Caki2 (cell line): ENCODE measurements at regions of chr9 and their contacts with region 1.

Region 1: DNA sequence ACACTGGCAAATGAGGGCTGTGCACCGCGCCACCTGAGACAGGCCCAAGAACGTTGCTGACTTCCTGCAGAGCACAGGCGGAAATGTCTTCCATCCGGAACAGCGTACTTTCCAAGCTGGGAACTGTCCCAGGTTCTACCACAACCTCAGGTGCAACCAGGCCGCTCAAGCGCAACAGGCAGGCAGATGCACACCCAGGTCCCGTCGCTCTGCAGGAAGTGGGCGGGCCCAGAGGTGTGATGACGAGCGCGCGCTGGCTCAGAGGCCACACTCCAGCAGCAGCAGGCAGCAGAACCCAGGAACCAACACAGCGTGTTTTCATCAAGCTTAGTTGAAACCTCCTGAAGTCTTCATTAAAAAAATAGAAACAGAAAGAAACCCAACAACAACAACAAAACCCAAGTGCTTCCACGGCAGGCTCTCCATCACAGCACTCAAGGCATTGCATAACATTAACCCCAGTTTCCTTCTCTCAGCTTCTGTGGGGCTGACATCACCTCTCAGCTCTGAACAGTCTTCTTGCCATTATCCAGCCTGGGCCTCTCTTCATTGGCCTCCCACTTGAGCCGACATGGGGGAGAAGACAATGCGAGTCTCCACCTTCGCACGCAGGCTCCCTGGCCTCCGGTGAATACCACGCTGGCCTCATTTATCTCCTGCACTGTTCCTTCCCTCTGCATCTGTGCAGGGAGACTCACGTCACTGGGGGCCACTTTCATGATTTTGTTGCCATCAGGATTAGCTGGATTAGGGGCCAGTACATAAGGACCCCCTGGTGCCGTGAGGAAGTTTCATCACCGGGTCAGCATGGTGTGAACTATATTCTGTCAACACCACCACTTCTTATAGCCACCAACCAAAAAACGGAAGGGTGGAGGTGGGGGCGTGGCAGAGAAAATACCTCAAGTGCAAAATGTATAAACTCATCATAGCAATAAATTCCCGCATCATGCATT is 22.1 kb downstream of the PTCH1 start:
- DNase-seq: peak; percentile 87

Region 2: DNA sequence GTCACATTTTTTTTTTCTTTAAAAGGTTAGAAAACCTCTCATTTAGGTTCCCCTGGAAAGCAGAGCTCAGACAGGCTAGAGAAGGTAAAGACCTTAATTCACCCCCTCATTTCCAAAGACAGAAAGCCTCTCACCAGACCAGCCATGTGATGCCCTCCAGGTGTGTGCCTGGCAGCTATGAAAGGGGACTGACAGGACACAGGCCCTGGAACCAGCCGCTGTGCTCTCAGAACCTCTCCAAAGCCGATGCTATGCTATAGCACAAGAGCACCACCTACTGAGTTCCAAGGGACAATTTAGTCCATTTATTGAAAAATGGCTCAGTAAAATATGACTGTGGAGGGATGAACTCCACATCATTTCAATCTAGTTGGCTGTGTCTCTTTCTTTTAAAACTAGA is 226.0 kb before region 1 on chr9:
- in situ Hi-C with region 1: loop called (anchors 25 kb)
- DNase-seq: peak; percentile 32

Region 3: DNA sequence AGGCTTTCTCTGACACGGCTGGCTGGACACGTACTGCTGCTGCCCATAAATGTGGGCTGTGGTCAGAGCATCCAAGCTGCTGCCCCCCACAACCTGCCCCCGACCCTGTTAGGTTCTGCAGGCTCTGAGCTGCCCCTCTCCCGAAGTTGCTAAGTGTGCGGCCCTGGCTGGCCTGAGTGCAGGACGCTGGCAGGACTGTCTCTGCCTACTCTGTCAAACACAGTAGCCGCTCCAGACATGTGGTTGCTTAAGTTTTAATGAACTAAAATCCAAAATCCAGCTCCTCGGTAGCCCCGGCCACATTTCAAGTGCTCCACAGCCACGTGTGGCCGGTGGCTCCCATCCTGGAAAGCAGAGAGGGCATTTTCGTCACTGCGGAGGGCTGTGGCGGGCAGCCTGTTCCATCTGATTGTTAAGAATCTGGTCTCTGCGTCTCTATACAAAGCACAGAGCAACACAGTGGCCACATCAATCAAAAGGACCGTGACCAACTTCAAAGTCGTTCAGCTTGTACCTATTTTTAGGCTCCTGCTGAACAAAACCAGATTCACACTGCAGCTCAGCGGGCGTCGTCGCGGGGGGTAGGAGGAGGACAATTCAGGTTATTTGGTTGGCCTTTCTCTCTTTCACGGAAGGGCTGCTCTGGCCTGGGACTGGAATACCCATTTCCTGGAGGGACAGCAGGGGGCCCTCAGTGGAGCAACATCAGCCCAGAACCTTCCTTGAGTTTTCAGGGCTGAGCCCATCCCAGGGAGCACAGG is 46.9 kb before region 1 on chr9:
- in situ Hi-C with region 1: loop called (anchors 10 kb)
- DNase-seq: no peak